ENCODE measurements at regions of chr14 and their contacts with region 1.

Region 1: DNA sequence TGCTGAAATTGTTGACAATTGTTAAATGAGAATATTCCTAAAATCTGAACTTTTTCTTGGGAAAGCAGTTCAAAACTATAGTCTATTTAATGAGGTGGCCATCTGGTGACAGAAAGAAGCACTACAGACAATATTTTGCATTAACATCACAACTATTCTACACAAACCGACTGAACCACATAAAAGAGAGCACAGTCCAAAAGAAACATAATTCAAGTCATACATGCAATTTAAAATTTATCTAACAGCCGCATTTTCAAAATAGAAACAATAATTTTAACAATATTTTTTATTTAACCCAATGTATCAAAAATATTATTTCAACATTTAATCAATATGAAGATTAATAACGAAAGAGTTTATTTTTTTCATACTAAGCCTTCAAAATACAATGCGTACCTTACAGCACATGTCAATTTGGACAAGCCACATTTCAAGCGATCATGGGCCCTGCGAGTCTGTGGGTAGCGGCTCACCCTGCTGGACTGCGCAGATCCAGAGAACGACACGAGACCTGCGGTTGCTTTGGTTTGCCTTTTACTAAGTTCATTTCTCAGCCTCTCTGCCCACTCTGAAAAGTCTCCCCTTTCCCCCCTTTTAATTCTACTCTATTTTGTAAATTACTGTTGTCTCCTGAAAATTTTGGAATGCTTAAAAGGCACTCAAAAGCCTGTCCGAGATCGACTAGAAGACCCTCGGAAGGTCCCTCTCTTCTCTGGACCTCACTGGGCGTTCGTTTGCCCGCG is 947 bp upstream of the LRRC9 start:
- ATAC-seq: peak; percentile 45 to 86 (median 54)
- H3K4me3 ChIP-seq: peak overlapping the region; percentile 60 to 77 (median 63)
- H3K27ac ChIP-seq: peak overlapping the region; percentile 17 to 74
- H3K4me1 ChIP-seq: peaks cover 8 to 9% of the 10 kb centered on the region in 2 donors

Region 2: DNA sequence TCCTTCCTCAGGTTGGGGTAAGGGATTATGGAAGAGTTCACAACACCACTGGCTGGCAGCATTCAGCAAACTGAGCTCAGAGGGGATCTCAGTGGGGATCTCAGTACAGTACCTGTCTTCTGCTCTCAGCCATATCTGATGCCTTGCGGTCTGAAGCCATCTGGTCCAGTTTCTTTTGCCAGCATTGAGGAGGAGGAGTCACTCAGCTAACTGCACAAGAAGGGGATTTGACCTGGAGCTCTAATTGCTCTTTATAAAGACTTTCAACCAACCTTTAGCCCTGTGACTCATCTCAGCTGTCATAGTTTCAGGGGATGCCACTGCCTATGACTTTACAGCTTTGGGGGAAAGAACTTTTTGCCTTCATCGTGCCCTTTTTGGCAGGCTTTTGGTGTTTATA is 389.8 kb before region 1 on chr14:
- in situ Hi-C with region 1: loop called in 1 of 9 experiments (anchors 25 kb)
- ATAC-seq: no peak
- H3K4me3 ChIP-seq: no peak overlapping the region
- H3K27ac ChIP-seq: no peak overlapping the region
- H3K4me1 ChIP-seq: no peaks in the 10 kb centered on the region

Region 3: DNA sequence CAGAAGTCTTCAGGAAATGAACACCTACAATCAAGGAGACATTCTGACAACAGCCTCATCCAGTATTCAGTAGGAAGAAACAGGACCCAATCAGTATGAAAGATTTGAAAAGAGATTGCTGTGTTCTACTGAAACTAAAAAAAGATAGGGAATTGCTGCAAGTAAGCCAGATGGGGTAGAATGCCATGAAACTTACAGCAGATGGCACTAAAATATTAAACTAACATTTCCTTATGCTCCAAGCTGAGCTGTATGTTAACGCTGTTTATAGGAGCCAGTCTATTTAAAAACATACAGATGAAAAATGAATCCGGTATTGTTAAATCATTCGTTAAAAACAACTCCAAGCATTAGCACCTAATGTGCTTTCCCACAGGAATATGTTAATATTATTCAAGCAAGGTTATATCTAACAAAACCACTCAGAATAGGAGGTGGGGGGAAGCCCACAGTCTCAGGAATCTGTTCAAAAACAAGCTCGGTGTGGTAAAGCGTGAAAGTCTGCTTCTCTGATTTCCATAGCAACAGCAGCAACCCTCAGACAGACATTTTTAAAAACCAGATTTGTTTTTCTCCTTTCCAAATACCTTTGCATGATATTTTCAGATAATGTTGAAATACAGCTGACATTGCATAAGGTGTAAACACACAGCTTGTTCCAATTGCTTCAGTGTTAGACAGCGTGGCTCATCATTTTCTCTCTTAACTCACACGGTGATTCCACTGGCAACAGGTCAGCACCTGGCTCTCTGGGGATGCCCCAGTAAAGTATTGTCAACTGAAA is 211.0 kb before region 1 on chr14:
- in situ Hi-C with region 1: loop called in 1 of 9 experiments (anchors 25 kb)
- ATAC-seq: peak in 6 of 8 experiments; percentile 27 to 85 (median 78)
- H3K4me3 ChIP-seq: no peak overlapping the region
- H3K27ac ChIP-seq: no peak overlapping the region
- H3K4me1 ChIP-seq: peaks cover 7 to 9% of the 10 kb centered on the region in 2 donors

Region 4: GRCh38 chr14:60744566-60744965 is 825.6 kb after region 1 on chr14:
- in situ Hi-C with region 1: no loop called
- ATAC-seq: no peak
- H3K4me3 ChIP-seq: no peak overlapping the region
- H3K27ac ChIP-seq: no peak overlapping the region
- H3K4me1 ChIP-seq: no peaks in the 10 kb centered on the region

Measured in motor neuron (in vitro differentiated cells).